ENCODE measurements at regions of chr16 and their contacts with region 1.

Region 1: DNA sequence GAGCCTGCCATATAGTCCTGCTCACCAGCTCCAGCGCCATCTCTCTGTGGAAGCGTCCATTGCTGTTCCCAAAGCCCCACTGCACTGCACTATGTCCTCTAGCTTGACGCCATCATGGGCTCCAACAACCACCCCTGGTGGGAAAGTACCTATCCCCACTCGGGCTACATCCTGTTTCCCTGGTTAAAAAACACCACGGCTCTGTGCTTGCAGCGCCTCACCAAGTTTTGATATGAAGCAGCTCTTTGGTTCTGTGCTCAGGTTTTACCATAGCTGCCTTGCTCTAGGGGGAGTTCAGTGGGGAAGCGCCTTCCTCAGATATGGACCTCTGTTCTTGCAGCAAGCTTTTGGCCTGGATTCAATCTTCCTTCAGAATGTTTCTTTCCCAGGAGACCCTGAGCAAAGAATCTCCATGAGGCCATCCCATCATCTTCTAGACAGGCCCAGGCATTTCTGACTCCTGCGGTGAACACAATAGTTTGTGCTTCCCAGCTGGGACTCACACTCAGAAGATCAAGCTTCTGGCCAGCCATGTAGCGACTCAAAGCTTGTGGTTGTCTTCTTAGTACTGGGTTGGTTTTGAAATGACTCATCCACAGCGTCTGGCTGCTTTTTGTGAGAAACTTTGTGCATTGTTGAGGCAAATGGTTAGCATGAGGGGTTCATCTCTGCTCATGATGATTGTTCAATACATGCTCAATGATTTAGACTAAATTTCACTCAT is 39.5 kb downstream of the DYNLRB2 start:
- DNase-seq: peak; percentile 95
- ATAC-seq: peak; percentile 88
- H3K4me3 Mint-ChIP-seq: peak overlapping the region; percentile 54
- H3K27ac Mint-ChIP-seq: peak overlapping the region; percentile 96
- H3K4me1 Mint-ChIP-seq: peaks cover 73% of the 10 kb centered on the region
- H3K27me3 Mint-ChIP-seq: no peaks in the 10 kb centered on the region

Region 2: GRCh38 chr16:80554033-80554432 is 26.2 kb before region 1 on chr16:
- CTCF ChIA-PET with region 1: interaction called, 12 read pairs
- DNase-seq: no peak
- ATAC-seq: peak; percentile 61
- H3K4me3 Mint-ChIP-seq: no peak overlapping the region
- H3K27ac Mint-ChIP-seq: peak overlapping the region; percentile 50
- H3K4me1 Mint-ChIP-seq: peaks cover 25% of the 10 kb centered on the region
- H3K27me3 Mint-ChIP-seq: no peaks in the 10 kb centered on the region

Region 3: GRCh38 chr16:80564394-80564793 is 15.9 kb before region 1 on chr16:
- CTCF ChIA-PET with region 1: interaction called, 10 read pairs
- DNase-seq: no peak
- ATAC-seq: no peak
- H3K4me3 Mint-ChIP-seq: no peak overlapping the region
- H3K27ac Mint-ChIP-seq: peak overlapping the region; percentile 80
- H3K4me1 Mint-ChIP-seq: peaks cover 51% of the 10 kb centered on the region
- H3K27me3 Mint-ChIP-seq: no peaks in the 10 kb centered on the region

Region 4: GRCh38 chr16:80591071-80591915 is 11.0 kb after region 1 on chr16:
- CTCF ChIA-PET with region 1: interaction called, 25 read pairs
- DNase-seq: peak; percentile 73
- ATAC-seq: peak; percentile 89
- H3K4me3 Mint-ChIP-seq: peak overlapping the region; percentile 26
- H3K27ac Mint-ChIP-seq: peak overlapping the region; percentile 76
- H3K4me1 Mint-ChIP-seq: peaks cover 45% of the 10 kb centered on the region
- H3K27me3 Mint-ChIP-seq: peaks cover 7% of the 10 kb centered on the region

Measured in activated CD8-positive, alpha-beta memory T cell treated with anti-CD3 and anti-CD28 coated beads, Interleukin-2, amount 10 ng/mL, durations not matched to agents 7 days and 5 days (primary cell).